Activated T-helper 2 cell treated with anti-CD3 and anti-CD28 coated beads, Interferon-gamma antibody, Interleukin-2, Interleukin-4, amounts not matched to agents 10 μg/mL and 5 μg/mL and 100 μg/mL, durations not matched to agents 14 hours and 24 hours and 36 hours (primary cell): ENCODE measurements at regions of chr11 and their contacts with region 1.

Region 1: DNA sequence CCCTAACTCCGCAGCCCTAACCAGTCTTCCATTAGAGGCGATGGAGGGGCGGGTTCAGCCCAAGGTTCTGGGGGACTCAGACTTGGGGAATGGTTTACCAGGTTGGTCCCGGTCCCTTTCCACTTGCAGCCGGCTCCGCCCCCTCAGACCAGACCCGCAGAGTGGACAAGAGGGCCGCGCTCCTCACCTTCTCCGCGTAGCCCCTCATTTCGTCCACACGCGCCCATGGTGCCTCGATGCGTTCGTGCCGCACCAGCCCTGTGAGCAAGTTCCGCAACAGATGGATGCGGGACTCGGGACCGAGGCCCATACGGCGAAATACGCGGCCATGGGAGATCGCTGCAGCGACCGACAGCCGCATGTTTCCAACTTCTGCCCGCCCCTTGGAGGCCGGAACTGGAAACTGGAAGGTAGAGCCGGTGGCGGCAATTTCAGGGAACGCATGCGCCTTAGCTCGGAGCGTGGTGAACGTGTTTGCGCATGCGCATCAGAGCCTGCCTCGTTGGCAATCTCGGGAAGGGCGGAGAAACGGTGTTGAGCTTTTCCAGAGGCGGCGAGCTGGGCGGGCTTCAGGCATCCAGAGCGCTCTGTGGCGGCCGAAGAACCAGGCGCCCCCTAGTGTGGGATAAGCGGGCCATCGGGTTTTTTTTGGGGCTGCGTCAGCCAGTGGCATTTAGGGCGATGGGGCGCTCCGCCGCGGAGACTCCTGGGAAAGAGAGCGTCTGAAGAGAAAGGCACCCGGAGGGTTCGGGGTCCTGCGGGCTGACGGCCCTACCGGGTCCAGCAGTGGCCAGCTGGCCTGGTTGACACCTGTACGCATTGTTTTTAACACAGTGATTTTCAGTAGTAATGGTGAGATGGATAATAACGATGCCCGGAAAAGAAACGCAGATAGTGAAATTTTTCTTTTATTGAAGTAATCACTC is at the start of gene MRPL17:
- DNase-seq: peak; percentile 100
- H3K4me3 Mint-ChIP-seq: peak within 1 kb of the TSS; percentile 97
- H3K27ac Mint-ChIP-seq: peak within 1 kb of the TSS; percentile 98
- H3K4me1 Mint-ChIP-seq: peaks cover 20% of the 10 kb centered on the region
- H3K27me3 Mint-ChIP-seq: no peaks in the 10 kb centered on the region
- total RNA-seq, gene MRPL17: 103 and 108 TPM in 2 replicates

Region 2: DNA sequence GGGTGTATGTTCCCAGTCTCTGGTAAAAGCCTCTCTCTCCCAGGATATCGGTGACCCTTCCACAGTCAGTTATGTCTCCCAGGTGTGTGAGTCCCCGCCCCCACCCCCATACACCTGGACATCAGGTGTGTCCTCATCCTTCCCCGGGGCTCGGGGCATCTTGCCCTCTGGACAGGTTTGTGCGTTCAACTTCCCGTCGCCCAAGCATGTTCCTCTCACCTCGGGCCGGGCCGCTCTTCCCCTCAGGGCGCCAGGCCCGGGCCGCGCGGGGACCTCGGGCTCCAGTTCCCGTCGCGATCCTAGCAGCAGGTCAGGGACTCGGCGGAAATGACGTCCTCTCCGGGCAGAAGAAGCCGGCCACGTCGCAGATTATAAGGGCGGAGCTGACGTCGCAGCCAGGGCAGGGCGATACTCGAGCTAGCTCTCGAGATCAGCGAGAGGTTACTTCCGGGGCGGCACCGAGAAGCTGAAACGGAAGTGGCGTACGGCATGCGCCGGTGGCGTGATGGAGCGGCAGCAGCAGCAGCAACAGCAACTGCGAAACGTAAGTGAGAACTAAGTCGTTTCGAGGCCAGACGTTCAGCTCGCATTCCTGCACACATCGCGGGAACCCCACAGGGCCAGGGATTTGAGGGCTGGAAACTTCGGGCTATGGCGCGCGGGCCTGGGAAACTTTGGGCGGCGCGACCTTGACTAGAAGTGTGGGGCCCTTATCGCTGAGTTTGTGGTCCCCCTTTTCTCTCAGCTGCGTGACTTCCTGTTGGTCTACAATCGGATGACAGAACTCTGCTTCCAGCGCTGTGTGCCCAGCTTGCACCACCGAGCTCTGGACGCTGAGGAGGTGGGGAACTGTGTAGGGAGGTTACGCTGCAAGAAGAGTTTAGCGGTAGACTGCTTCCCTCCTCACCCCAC is 201.9 kb before region 1 on chr11 and contains the starts of genes ARFIP2 and TIMM10B:
- intact Hi-C with region 1: loop called (anchors 1 kb)
- DNase-seq: peak; percentile 97
- H3K4me3 Mint-ChIP-seq: peak within 1 kb of the TSS; percentile 88
- H3K27ac Mint-ChIP-seq: peak within 1 kb of the TSS; percentile 93
- H3K4me1 Mint-ChIP-seq: peaks cover 25% of the 10 kb centered on the region
- H3K27me3 Mint-ChIP-seq: no peaks in the 10 kb centered on the region
- total RNA-seq, gene ARFIP2: 46.8 and 48.6 TPM in 2 replicates
- total RNA-seq, gene TIMM10B: 42.9 and 43.0 TPM in 2 replicates

Region 3: GRCh38 chr11:6603287-6604080 is 79.7 kb before region 1 on chr11 and contains the starts of genes ILK and RRP8:
- intact Hi-C with region 1: loop called (anchors 1 kb)
- DNase-seq: peak; percentile 84
- H3K4me3 Mint-ChIP-seq: no peak within 1 kb of the TSS
- H3K27ac Mint-ChIP-seq: no peak within 1 kb of the TSS
- H3K4me1 Mint-ChIP-seq: peaks cover 38% of the 10 kb centered on the region
- H3K27me3 Mint-ChIP-seq: no peaks in the 10 kb centered on the region
- total RNA-seq, gene ILK: 99.5 and 105 TPM in 2 replicates
- total RNA-seq, gene RRP8: 29.4 and 30.1 TPM in 2 replicates

Region 4: GRCh38 chr11:6619004-6619745 is 64.0 kb before region 1 on chr11 and contains the start of gene TPP1:
- intact Hi-C with region 1: loop called (anchors 1 kb)
- DNase-seq: peak; percentile 87
- H3K4me3 Mint-ChIP-seq: no peak within 1 kb of the TSS
- H3K27ac Mint-ChIP-seq: no peak within 1 kb of the TSS
- H3K4me1 Mint-ChIP-seq: peaks cover 6% of the 10 kb centered on the region
- H3K27me3 Mint-ChIP-seq: no peaks in the 10 kb centered on the region
- total RNA-seq, gene TPP1: 36.2 and 39.1 TPM in 2 replicates

Region 5: DNA sequence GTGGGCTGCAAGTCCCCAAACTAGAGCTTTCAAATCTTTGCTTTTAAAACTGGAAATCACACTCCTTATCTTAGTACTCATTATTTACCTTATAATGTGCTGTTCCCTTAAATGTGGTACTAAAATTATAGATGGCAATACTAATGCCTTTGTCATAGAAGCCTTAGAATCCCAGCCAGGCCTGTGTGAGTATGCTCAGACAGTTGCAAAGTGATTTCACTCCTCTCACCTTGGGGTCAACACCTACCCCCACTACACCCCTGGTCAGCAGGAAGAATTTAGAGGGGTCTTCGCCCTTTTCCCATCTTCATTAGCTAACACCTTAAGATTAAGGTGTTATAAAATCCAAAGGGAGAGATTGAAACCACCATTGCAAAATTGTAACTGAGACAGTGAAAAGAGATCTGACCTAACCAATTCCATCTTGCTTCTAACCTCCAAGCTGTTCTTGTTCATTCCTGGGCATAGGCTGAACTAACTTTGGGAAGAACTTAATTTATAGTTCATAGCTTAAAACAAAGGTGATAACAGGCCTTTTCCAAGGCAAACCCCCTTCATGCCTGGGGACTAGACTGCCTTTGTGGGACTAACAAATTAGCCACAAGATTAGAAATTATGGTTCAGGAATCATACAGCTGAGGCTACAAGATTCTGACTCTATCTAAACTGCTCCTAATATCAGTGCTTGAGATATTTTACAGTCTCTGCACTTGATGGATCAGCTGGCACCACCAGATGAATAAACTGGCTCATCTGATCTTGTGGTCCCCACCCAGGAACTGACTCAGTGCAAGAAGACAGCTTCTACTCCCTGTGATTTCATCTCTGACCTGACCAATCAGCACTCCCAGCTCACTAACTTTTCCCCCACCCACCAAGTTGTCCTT is 10.4 kb after region 1 on chr11:
- intact Hi-C with region 1: loop called (anchors 1 kb)
- DNase-seq: peak; percentile 36
- H3K4me3 Mint-ChIP-seq: no peak overlapping the region
- H3K27ac Mint-ChIP-seq: peak overlapping the region; percentile 29
- H3K4me1 Mint-ChIP-seq: peaks cover 22% of the 10 kb centered on the region
- H3K27me3 Mint-ChIP-seq: no peaks in the 10 kb centered on the region